Sigmoid colon (tissue), 7 donors: ENCODE measurements at regions of chr20 and their contacts with region 1.

Region 1: DNA sequence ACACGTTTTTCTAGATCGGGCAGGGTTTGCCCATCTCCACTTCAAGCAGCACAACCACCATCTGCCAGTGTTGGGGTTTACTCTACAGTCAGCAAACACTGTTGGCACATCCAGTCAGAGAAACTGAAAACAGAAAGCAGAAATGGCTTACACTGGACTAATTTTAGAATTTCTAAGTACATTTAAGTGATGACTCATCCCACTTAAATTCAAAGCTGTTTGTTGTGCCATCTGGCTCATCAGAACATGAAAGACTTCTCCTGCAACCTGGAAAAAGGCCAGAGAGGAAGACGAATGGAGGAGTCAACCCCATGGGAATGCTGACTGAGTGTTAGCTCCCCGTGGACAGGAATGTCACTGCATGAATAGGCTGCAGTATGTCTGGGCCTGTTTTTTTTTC is 21.8 kb downstream of the FAM209B start:
- DNase-seq: no peak
- H3K4me3 ChIP-seq: no peak overlapping the region
- H3K27ac ChIP-seq: no peak overlapping the region
- H3K4me1 ChIP-seq: peaks cover 0 to 9% (median 6%) of the 10 kb centered on the region in 4 donors
- H3K27me3 ChIP-seq: no peaks in the 10 kb centered on the region
- CTCF ChIP-seq: no peak
- EP300 ChIP-seq: no peak
- POLR2A ChIP-seq: no peak

Region 2: DNA sequence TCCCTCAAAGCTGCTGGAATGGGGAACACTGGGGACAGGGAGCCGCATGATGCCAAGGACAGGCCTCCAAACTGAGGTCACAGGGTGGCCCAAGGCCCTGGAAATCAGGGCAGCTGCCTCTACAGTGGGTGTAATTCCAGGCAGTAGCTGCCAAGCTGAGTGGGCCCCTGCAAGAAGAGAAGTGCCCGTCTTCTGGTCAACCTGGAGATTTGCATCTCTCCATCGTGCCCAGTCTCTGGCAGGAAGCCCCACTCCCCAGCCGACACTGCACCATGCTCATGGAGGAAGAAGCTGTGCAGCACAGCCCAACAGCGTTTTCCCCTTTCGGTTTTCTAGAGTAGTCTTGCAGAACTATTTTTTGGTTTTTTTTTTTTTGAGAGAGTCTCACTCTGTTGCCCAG is 32.6 kb before region 1 on chr20:
- intact Hi-C with region 1: no loop called
- DNase-seq: no peak
- H3K4me3 ChIP-seq: no peak overlapping the region
- H3K27ac ChIP-seq: no peak overlapping the region
- H3K4me1 ChIP-seq: peaks cover 0 to 3% (median 0%) of the 10 kb centered on the region in 4 donors
- H3K27me3 ChIP-seq: no peaks in the 10 kb centered on the region
- CTCF ChIP-seq: no peak
- EP300 ChIP-seq: no peak
- POLR2A ChIP-seq: no peak

Region 3: GRCh38 chr20:56945059-56945458 is 390.2 kb after region 1 on chr20:
- intact Hi-C with region 1: loop called (anchors 10 kb)
- DNase-seq: peak; percentile 69
- H3K4me3 ChIP-seq: no peak overlapping the region
- H3K27ac ChIP-seq: no peak overlapping the region
- H3K4me1 ChIP-seq: no peaks in the 10 kb centered on the region
- H3K27me3 ChIP-seq: no peaks in the 10 kb centered on the region
- CTCF ChIP-seq: peak in 2 of 4 experiments; percentile 5 to 45
- EP300 ChIP-seq: no peak
- POLR2A ChIP-seq: no peak

Region 4: DNA sequence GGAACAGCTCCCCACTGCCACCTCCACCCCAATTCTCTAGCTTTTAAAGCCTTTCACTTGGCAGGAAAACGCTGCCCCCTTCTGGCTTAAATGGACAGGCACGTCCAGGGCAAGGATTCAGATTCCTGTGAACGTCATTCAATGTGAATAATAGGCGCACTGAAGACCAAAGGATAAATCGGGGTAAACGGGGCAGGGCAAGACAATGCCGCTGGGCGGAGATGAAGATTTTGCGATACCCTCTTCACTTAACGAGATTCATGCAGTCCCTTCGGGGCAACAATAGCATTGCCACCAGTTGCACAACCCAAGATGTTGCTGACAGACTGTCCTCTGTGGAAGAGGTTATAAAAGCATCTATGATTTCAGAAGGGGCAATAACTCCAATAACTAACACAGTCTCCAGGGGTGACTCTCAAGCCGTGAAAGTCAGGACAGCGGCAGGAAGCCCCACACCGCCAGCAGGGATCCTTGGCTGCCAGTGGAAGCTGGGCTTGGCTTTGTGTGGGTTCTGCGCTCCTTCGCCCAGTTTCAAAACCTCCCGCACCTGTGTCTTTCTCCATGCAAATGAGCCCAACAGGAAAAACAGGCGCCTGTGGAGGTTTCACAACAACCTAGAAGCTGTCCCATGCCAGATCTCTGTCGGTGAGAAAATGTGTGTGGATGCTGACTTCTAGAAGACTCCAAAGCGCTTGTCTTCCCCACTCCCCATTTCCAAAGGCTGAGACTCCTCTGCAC is 419.8 kb after region 1 on chr20:
- intact Hi-C with region 1: loop called (anchors 1 kb)
- DNase-seq: no peak
- H3K4me3 ChIP-seq: no peak overlapping the region
- H3K27ac ChIP-seq: no peak overlapping the region
- H3K4me1 ChIP-seq: peaks cover 0 to 6% (median 3%) of the 10 kb centered on the region in 4 donors
- H3K27me3 ChIP-seq: peaks cover 0 to 45% (median 11%) of the 10 kb centered on the region in 3 donors
- CTCF ChIP-seq: peak; percentile 46 to 69 (median 56)
- EP300 ChIP-seq: no peak
- POLR2A ChIP-seq: no peak

Region 5: DNA sequence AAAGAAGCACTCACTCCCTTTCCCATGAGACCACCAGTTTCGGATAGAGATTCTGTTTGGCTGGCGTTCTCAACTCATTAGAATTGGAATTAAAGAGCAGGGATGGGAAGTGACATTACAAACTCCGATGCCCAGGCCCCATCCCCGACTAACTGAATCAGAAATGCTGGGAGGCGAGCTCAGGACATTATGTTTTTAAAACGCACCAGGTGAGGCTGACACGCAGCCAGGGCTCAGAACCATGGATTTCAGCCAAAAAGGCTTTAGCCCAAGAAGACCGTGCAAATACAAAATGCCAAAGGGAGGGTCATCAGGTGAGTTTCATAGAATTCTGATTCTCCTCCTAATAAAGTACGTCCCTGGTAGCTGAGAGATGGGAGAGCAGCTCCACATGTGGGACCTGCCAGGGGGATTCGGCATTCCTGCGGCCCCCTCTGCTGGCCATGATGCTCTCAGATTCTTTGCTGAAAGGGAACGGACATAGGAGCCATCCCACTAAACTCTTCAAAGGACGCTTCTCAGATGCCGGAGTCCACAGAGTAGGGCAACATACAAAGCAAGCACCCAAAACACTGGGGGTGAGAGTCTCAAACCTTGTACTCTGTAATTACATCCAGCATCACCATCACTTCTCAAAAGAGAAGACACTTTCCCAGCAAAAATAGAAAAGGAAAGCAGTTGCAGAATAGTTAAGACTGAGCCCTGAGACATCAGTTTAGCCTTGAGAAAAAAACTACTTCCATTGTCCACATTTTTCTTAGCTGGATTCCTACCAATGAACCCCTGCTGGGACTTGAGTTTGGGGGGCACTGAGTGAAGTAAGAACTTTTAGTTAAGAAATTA is 506.4 kb after region 1 on chr20:
- intact Hi-C with region 1: loop called (anchors 5 kb)
- DNase-seq: peak; percentile 73
- H3K4me3 ChIP-seq: no peak overlapping the region
- H3K27ac ChIP-seq: no peak overlapping the region
- H3K4me1 ChIP-seq: peaks cover 0 to 9% (median 0%) of the 10 kb centered on the region in 4 donors
- H3K27me3 ChIP-seq: peaks cover 0 to 26% (median 5%) of the 10 kb centered on the region in 3 donors
- CTCF ChIP-seq: peak in 1 of 4 experiments; percentile 49
- EP300 ChIP-seq: no peak
- POLR2A ChIP-seq: no peak